Left lung (tissue), 14 donors: ENCODE measurements at regions of chr3 and their contacts with region 1.

Region 1: DNA sequence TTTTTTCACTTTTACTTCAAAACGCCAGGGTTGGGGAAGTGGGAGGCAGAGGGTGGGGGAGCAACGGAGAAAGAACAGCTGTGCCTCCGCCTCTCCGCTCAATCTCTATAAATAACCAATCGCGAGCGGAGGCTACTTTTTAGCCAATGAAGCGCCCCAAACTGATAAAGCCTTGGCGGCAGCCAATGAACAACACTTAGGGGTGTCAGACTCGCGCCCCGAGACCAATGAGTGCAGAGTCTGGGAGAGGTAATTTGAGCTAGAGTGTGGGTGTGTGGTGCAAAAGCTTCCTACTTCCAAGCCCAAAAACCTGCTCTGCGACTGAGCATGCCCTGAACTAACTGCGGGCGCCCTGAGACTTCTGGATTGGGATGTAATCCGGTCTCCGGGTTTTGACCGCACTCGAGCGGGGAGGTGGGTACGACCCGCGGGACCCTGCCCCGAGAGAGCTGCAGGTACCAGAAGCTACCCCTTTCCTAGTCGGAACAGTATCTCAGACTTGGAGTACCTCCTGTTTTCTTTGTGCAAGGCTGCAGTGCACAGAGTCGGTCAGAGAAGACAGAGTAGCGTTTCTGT is 800 bp upstream of the RAP2B start:
- DNase-seq: peak; percentile 88 to 98 (median 96)
- ATAC-seq: peak; percentile 82
- H3K4me3 ChIP-seq: peak overlapping the region; percentile 87 to 90
- H3K27ac ChIP-seq: peak overlapping the region; percentile 97
- H3K4me1 ChIP-seq: peaks cover 19 to 31% of the 10 kb centered on the region in 2 donors
- H3K27me3 ChIP-seq: no peaks in the 10 kb centered on the region
- CTCF ChIP-seq: no peak

Region 2: GRCh38 chr3:153043729-153044328 is 117.4 kb before region 1 on chr3:
- intact Hi-C with region 1: loop called in 1 of 2 experiments (anchors 10 kb)
- DNase-seq: no peak
- ATAC-seq: no peak
- H3K4me3 ChIP-seq: no peak overlapping the region
- H3K27ac ChIP-seq: peak overlapping the region in 1 of 2 donors; percentile 60
- H3K4me1 ChIP-seq: peaks cover 0 to 14% of the 10 kb centered on the region in 2 donors
- H3K27me3 ChIP-seq: no peaks in the 10 kb centered on the region
- CTCF ChIP-seq: no peak

Region 3: DNA sequence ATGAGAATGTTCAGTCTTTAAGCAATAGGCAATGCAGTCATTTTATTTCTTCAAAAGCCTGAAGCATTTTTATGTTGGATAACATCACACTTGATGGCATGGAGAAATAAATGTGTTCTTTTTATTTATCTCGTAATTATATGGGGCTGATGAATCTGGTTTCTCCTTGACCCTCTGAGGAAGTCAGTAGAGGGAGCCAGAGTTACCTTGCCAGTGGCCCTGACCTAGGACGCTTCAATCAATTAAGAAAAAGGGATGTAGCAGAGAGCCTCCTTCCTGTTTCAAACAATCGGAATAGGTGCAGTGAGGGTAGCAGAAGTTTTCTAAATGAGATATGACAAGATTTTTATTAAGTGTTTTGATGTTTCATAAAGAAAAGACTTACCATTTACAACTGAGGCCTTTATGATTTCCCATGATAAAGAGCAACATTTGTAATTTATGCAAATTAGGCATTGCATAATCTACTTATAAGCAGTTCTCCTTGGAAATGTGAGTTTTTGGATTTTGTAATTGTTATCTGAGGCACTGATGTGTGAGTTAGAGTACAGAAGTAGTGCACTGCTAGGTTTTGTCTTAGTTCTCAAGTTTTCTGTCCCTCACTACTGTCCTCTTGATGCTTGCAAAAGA is 129.9 kb after region 1 on chr3:
- intact Hi-C with region 1: loop called in 1 of 2 experiments (anchors 10 kb)
- DNase-seq: no peak
- ATAC-seq: peak; percentile 84
- H3K4me3 ChIP-seq: no peak overlapping the region
- H3K27ac ChIP-seq: peak overlapping the region; percentile 20 to 22
- H3K4me1 ChIP-seq: peaks cover 29 to 50% of the 10 kb centered on the region in 2 donors
- H3K27me3 ChIP-seq: no peaks in the 10 kb centered on the region
- CTCF ChIP-seq: peak in 1 of 2 donors; percentile 46

Region 4: DNA sequence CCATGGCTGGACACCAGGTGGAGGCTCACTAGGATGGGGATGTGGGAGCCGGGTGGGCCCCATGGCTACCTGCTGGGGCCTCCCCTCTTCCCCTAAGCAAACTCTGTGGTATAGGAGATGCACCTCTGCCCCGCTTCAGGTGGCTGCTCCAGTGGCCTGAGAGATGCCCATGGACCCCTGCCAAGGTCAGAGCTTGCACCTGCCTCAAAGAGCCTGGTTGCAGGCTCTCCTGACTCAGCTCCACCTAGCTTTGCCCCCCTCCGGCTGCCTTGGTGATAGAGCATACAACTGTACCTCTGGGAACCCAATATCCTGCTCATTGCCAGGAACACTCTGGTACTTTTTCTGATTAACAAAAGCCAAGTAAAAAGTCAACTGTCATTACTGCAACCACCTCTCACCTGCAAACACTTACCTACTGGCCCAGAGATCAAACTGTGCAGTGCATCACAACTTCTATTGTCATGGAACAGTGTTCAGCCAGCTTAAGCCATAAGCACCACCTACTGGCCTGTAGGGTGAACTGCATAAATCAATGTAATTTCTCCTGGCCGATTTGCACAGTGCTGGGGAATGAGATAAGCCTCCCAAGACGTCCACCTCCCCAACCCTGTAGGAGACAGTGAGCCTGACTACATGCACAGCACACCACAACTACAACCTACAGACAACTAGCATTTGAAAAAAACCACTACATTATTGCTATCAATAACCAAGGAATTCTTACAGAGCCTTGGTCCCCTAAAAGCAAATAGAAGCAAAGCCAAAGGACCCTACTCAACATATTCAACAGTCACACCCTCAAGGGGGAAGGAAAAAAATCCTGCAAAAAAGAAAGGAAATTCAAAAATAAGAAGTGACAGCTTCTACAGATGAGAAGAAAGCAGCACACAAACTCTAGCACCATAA is 607.6 kb after region 1 on chr3:
- intact Hi-C with region 1: loop called in 1 of 2 experiments (anchors 5 kb)
- DNase-seq: peak in 2 of 4 donors; percentile 37 to 58
- ATAC-seq: peak; percentile 99
- H3K4me3 ChIP-seq: no peak overlapping the region
- H3K27ac ChIP-seq: no peak overlapping the region
- H3K4me1 ChIP-seq: no peaks in the 10 kb centered on the region
- H3K27me3 ChIP-seq: no peaks in the 10 kb centered on the region
- CTCF ChIP-seq: peak; percentile 72 to 75